ENCODE measurements at regions of chr16 and their contacts with region 1.

Region 1: GRCh38 chr16:3129137-3130131 is 5.4 kb upstream of the ZNF213 start:
- DNase-seq: peak; percentile 69
- ATAC-seq: peak; percentile 58
- H3K4me3 Mint-ChIP-seq: peak overlapping the region; percentile 45
- H3K27ac Mint-ChIP-seq: peak overlapping the region; percentile 95
- H3K4me1 Mint-ChIP-seq: peaks cover 42% of the 10 kb centered on the region
- H3K27me3 Mint-ChIP-seq: no peaks in the 10 kb centered on the region
- CTCF ChIP-seq: peak; percentile 87

Region 2: DNA sequence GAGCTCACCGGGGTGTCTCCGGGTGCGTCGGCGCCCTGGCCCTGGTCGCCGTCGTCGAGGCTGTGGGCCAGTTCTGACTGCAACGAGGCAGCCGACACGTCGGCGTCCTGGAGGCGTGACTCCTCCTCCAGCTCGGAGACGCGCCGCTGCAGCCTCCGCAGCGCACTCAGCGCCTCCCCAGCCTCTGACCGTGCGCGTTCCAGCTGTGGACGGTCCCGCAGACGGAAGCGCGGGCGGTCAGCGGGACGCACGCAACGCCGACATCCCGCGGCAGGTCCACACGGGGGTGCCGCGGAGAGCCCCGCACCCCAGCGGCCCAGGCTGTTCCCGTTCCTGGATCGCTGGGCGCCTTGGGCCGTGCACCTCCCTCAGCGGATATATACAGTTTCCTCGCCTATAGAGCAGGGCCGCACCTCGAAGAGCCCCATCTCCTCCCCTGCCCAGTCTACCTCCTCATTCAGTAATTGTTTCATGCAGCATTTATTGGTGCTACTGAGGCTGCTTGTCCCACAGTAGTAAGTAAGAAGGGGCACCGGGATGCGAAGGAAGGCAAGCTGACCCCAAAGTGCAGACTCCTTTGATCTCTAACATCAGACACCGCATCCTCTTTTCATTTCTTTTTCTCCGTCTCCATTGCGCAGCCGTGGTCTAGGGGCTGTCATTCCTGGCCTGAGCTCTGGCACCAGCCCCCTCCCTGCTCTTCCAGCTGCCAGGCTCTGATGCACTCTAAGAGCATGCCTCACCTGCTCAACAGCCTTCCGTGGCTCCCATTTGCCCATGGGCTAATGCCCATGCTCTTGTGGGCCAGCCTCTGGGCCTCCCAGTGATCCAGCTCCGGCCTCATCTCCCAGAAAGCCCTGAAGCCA is 99.7 kb before region 1 on chr16:
- CTCF ChIA-PET with region 1: interaction called, 19 read pairs
- POLR2A ChIA-PET with region 1: interaction called, 5 read pairs
- DNase-seq: no peak
- ATAC-seq: no peak
- H3K4me3 Mint-ChIP-seq: no peak overlapping the region
- H3K27ac Mint-ChIP-seq: no peak overlapping the region
- H3K4me1 Mint-ChIP-seq: peaks cover 22% of the 10 kb centered on the region
- H3K27me3 Mint-ChIP-seq: no peaks in the 10 kb centered on the region
- CTCF ChIP-seq: no peak

Region 3: GRCh38 chr16:3094289-3095027 is 35.0 kb before region 1 on chr16:
- CTCF ChIA-PET with region 1: interaction called, 60 read pairs
- POLR2A ChIA-PET with region 1: interaction called, 8 read pairs
- DNase-seq: peak; percentile 62
- ATAC-seq: no peak
- H3K4me3 Mint-ChIP-seq: peak overlapping the region; percentile 37
- H3K27ac Mint-ChIP-seq: peak overlapping the region; percentile 96
- H3K4me1 Mint-ChIP-seq: peaks cover 42% of the 10 kb centered on the region
- H3K27me3 Mint-ChIP-seq: no peaks in the 10 kb centered on the region
- CTCF ChIP-seq: peak; percentile 68; the same call in 1 of the 2 replicates

Region 4: DNA sequence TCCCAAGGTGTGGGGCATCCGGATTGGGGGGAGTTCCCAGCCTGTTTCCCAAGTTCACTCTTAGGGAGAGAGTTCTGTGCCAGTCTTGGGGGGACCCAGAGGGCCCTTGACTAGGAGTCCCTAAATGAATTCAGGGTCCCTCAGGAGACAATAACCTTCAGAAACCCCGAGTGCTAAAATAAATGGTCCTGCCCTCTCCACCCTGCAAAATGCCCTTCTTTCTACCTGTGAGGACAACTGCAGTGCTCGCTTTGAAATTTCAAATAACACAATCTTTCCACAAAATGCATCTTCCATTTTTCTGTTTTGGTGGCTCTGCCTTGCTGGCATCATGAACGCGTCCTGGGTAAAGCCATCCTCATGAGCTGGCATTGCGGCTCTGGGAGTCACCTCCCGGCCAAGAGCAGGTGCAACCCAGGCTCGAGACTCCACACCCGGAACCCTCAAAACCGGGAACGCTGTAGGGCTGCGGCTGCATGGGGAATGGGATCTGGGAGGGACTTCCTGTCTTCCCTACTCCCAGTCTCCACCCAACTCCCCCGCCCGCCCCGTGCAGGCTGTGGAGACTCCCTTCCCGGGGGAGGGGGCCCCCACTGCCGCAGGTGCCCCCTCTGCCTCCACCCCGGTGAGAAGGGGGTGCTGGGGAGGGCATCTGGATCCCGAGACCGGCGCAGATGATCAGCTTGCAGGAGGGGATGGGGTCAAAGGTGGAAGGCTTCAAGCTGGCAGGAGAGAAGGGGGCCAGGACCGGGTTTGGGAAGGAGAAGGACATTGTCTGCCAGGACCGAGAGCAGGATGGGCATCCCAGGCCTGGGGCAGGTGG is 17.2 kb before region 1 on chr16 and contains the start of gene ZNF205:
- CTCF ChIA-PET with region 1: interaction called, 112 read pairs
- POLR2A ChIA-PET with region 1: interaction called, 4 read pairs
- DNase-seq: peak; percentile 88
- ATAC-seq: peak; percentile 94
- H3K4me3 Mint-ChIP-seq: peak within 1 kb of the TSS; percentile 88
- H3K27ac Mint-ChIP-seq: peak within 1 kb of the TSS; percentile 94
- H3K4me1 Mint-ChIP-seq: peaks cover 27% of the 10 kb centered on the region
- H3K27me3 Mint-ChIP-seq: no peaks in the 10 kb centered on the region
- CTCF ChIP-seq: no peak
- total RNA-seq, gene ZNF205: 17.7 to 22.7 TPM (median 21.3 TPM) in 3 replicates

Region 5: DNA sequence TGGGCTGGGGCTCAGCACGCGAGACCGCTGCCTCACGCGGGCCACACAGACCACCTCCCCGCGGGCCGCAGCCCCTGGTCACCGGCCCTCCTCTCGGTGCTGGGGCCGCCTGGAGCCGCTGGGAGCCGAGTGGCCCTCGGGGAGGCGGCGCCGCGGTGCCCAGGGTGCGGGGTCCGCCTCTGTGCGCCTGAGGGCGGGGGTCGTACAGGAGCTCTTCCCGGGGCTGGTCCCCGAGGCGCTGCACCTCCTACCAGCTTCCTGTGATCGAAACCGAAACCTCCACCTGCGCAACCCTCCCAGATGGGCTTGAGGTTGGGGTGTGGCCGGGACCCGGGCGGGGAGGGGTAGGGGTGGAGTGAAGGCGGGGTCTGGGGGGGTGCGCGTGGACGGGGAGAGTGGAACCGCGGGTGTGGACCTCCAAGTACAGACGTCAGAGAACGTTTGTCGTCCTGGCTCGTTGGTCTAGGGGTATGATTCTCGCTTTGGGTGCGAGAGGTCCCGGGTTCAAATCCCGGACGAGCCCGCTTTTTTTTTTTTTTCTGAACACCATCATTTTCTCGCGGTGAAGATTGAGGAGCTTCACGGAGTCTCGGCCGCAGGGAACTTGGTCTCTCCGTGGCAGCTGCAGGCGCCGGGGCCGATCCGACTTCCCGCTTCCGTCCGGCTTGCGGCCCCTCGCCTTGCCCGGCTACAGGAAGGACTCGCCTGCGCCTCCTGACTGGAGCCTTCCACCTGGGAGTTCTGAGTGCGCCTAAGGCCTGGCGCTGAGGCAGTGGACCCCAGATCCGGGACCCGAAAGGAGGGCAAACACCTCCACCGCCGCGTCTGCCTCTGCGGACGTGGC is 29.3 kb after region 1 on chr16:
- CTCF ChIA-PET with region 1: interaction called, 49 read pairs
- POLR2A ChIA-PET with region 1: interaction called, 4 read pairs
- DNase-seq: peak; percentile 87
- ATAC-seq: peak; percentile 52
- H3K4me3 Mint-ChIP-seq: peak overlapping the region; percentile 91
- H3K27ac Mint-ChIP-seq: peak overlapping the region; percentile 88
- H3K4me1 Mint-ChIP-seq: peaks cover 6% of the 10 kb centered on the region
- H3K27me3 Mint-ChIP-seq: peaks cover 32% of the 10 kb centered on the region
- CTCF ChIP-seq: no peak

Region 6: GRCh38 chr16:3188925-3189825 is 59.7 kb after region 1 on chr16:
- CTCF ChIA-PET with region 1: interaction called, 17 read pairs
- POLR2A ChIA-PET with region 1: interaction called, 4 read pairs
- DNase-seq: peak; percentile 80
- ATAC-seq: peak; percentile 35
- H3K4me3 Mint-ChIP-seq: peak overlapping the region; percentile 97
- H3K27ac Mint-ChIP-seq: no peak overlapping the region; the same call in 1 of the 2 replicates
- H3K4me1 Mint-ChIP-seq: peaks cover 18% of the 10 kb centered on the region
- H3K27me3 Mint-ChIP-seq: peaks cover 61% of the 10 kb centered on the region
- CTCF ChIP-seq: no peak